Transverse colon (tissue), 4 donors: ENCODE measurements at regions of chrX and their contacts with region 1.

Region 1: GRCh38 chrX:155819966-155820491 is 61.1 kb upstream of the VAMP7 start:
- DNase-seq: peak; percentile 65
- H3K4me3 ChIP-seq: no peak overlapping the region
- H3K27ac ChIP-seq: no peak overlapping the region
- H3K4me1 ChIP-seq: no peaks in the 10 kb centered on the region
- H3K27me3 ChIP-seq: no peaks in the 10 kb centered on the region
- CTCF ChIP-seq: peak; percentile 48 to 61 (median 52)
- EP300 ChIP-seq: no peak
- POLR2A ChIP-seq: no peak

Region 2: DNA sequence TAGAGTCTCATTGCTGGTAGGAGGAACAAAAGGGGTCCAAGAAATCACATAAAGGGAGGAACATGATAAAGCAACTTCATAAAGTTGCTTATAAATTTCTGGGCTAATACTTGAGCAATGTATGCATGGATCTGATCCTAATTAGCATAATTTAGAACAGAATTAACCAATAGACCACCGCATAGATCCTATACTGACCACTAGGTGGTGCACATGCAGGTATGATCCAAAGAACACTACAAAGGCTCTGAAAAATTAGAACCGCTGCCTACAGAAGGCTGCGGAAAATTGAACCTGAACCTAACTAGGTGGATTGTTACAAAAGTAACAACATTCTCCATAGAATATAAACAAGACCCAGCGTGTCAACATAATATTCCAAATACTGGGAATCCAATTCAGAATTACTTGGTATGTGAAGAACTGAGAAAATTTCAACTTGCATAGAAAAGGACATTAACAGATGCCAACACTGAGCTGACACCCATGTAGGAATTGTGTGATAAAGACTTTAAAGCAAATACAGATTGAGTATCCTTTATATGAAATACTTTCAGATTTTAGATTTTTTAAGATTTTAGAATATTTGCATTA is 725.5 kb before region 1 on chrX:
- in situ Hi-C with region 1: loop called in 1 of 4 experiments (anchors 10 kb)
- intact Hi-C with region 1: no loop called
- DNase-seq: no peak
- H3K4me3 ChIP-seq: no peak overlapping the region
- H3K27ac ChIP-seq: no peak overlapping the region
- H3K4me1 ChIP-seq: no peaks in the 10 kb centered on the region
- H3K27me3 ChIP-seq: no peaks in the 10 kb centered on the region
- CTCF ChIP-seq: peak; percentile 32 to 58 (median 47)
- EP300 ChIP-seq: no peak
- POLR2A ChIP-seq: no peak

Region 3: DNA sequence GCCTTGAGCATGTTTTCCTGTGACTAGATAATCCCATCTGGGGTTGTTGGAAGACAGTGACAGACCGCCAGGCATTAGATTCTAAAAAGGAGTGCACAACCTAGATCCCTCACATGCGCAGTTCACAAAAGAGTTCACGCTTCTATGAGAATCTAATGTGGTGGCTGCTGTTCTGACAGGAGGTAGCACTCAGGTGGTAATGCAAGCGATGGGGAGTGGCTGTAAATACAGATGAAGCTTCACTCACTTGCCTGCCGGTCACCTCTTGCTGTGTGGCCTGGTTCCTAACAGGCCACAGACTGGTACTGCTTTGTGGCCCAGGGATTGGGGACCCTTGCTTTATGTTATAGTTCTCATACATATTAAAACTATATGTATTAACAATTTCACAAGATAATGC is 125.4 kb before region 1 on chrX:
- in situ Hi-C with region 1: no loop called
- intact Hi-C with region 1: no loop called
- DNase-seq: no peak
- H3K4me3 ChIP-seq: no peak overlapping the region
- H3K27ac ChIP-seq: no peak overlapping the region
- H3K4me1 ChIP-seq: no peaks in the 10 kb centered on the region
- H3K27me3 ChIP-seq: no peaks in the 10 kb centered on the region
- CTCF ChIP-seq: no peak
- EP300 ChIP-seq: no peak
- POLR2A ChIP-seq: no peak